Endothelial cell of umbilical vein (primary cell): ENCODE measurements at regions of chr11 and their contacts with region 1.

Region 1: GRCh38 chr11:121722431-121723245 is 269.9 kb upstream of the SORL1-AS1 start:
- DNase-seq: peak; percentile 94
- H3K4me3 ChIP-seq: peak overlapping the region; percentile 21 to 59 (median 31)
- H3K27ac ChIP-seq: peak overlapping the region; percentile 59
- H3K4me1 ChIP-seq: peaks cover 25% of the 10 kb centered on the region
- H3K27me3 ChIP-seq: peaks cover 3 to 5% of the 10 kb centered on the region in 2 experiments
- CTCF ChIP-seq: no peak
- POLR2A ChIP-seq: no peak

Region 2: DNA sequence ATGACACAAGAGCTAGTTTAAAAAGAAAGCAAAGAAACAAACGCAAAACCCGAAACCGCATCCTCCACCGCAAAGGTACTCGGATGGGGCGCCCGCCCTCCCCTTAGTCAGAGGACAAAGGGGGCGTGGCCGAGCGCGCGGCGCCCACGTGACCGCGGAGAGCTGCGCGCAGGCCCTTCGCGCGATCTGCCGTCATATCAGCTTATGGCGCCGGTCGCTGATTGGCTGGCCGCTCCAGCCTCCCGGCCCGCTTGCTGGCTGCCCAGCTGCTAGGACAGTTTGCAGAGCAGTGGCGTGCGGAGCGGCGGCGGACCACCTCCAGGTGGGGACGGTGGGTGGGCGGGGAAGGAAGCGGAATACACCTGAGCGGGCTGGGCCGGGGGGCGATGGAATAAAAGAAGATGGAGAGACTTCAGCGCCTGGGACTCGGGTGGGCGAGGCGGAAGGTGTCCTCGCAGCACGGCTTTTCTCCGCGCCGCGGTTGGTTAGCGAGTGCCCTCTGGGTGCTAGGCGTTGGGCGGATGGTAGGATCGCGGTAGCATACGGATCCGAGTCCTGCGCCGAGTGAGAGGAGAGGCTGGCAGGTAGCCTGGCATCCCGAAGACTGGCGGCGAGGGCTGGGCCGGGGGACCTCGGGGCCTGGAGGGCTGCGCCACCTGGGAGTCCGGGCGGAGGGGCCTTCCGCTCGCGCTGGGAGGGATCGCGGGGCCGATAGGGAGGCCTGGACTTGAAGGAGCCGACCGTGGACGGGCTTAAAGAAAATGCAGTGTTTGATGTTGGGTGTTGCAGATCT is 429.9 kb before region 1 on chr11 and contains the start of gene SC5D:
- CTCF ChIA-PET with region 1: no interaction called
- POLR2A ChIA-PET with region 1: no interaction called
- dilution Hi-C with region 1: no loop called
- intact Hi-C with region 1: loop called (anchors 10 kb)
- DNase-seq: peak; percentile 94
- H3K4me3 ChIP-seq: peak within 1 kb of the TSS; percentile 50 to 92 (median 86)
- H3K27ac ChIP-seq: peak within 1 kb of the TSS; percentile 58
- H3K4me1 ChIP-seq: peaks cover 15% of the 10 kb centered on the region
- H3K27me3 ChIP-seq: peaks cover 3% of the 10 kb centered on the region in 2 experiments
- CTCF ChIP-seq: no peak
- POLR2A ChIP-seq: peak; percentile 81
- total RNA-seq, gene SC5D: 40.0 and 40.2 TPM in 2 replicates

Region 3: DNA sequence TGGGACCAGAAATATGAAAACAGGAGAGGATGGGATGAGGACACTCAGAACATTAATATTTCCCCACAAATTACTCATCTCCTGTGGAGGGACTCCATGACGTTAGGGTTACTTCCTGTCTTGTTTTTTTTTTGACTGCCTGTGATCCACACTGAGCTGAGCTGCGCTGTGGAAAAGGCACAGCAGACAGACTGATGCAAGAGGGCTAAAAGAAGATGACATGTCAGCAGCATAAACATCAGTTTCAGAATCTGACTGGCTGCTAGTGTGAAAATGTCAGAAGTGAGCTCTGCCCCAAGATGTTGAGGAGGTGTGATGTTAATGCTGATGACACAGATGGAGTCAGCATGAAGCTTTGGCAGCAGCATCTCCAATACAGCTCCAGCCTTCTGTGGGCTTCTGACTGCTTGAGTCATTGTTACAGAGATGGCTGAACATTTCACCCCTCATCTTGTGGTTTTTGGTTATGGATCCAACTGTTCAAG is 106.6 kb after region 1 on chr11:
- CTCF ChIA-PET with region 1: no interaction called
- POLR2A ChIA-PET with region 1: no interaction called
- dilution Hi-C with region 1: no loop called
- intact Hi-C with region 1: loop called (anchors 1 kb)
- DNase-seq: peak; percentile 87
- H3K4me3 ChIP-seq: no peak overlapping the region
- H3K27ac ChIP-seq: peak overlapping the region; percentile 81
- H3K4me1 ChIP-seq: peaks cover 26% of the 10 kb centered on the region
- H3K27me3 ChIP-seq: no peaks in the 10 kb centered on the region
- CTCF ChIP-seq: no peak
- POLR2A ChIP-seq: peak; percentile 49

Region 4: DNA sequence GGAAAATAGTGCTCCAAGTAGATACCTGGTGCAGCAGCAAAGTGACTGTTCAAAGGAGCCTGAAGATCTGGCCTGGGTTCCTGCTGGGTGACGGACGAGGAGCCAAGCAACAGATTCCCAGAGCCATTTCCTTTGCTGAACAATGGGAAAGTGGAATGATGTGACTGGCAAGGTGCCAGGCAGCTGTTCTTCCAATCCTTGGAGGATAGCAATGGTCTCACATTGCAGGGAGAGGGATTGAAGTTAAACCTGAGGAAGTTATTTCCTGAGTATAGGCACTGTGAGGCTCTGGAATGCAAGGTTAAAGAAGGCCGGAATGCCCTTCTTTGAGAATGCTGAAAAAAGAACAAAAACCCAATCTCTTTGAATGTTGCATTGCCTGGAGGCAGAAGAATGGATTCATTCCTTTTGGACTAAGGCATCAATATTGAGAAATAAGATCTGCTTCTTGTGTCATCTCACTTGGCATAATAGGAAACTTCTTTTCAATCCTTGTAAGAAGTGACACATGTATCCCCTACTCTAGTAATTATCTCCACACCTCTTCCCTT is 169.6 kb after region 1 on chr11:
- CTCF ChIA-PET with region 1: no interaction called
- POLR2A ChIA-PET with region 1: no interaction called
- dilution Hi-C with region 1: no loop called
- intact Hi-C with region 1: loop called (anchors 1 kb)
- DNase-seq: peak; percentile 87
- H3K4me3 ChIP-seq: no peak overlapping the region
- H3K27ac ChIP-seq: no peak overlapping the region
- H3K4me1 ChIP-seq: peaks cover 12% of the 10 kb centered on the region
- H3K27me3 ChIP-seq: peaks cover 3 to 4% of the 10 kb centered on the region in 2 experiments
- CTCF ChIP-seq: no peak
- POLR2A ChIP-seq: no peak